ENCODE measurements at regions of chr16 and their contacts with region 1.

Region 1: GRCh38 chr16:83083361-83083760 is 456.6 kb downstream of the CDH13 start:
- DNase-seq: no peak
- H3K4me3 ChIP-seq: no peak overlapping the region
- H3K27ac ChIP-seq: no peak overlapping the region
- H3K4me1 ChIP-seq: no peaks in the 10 kb centered on the region
- H3K27me3 ChIP-seq: no peaks in the 10 kb centered on the region
- CTCF ChIP-seq: no peak
- POLR2A ChIP-seq: no peak

Region 2: DNA sequence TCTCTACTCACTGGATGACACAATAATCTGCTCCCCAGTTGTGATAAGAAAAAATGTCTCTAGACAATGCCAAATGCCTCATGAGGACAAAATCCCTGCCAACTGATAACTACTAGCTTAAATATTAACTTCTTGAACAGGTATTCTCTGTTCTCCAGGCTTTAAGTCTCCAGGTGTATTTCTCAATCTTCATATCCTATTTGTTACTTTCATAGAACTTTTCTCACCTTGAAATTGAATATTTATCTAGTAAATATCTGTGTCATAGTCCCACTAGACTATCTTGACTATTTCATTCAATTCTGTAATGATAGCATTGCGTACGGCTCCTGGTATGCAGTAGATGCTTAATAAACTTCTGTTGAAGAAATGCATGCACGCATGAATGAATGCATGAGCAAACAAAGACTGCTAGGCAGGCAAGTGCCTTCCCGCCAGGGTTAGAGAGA is 1032.4 kb before region 1 on chr16:
- intact Hi-C with region 1: loop called (anchors 5 kb)
- DNase-seq: no peak
- H3K4me3 ChIP-seq: no peak overlapping the region
- H3K27ac ChIP-seq: no peak overlapping the region
- H3K4me1 ChIP-seq: peaks cover 0 to 5% of the 10 kb centered on the region in 2 donors
- H3K27me3 ChIP-seq: peaks cover 0 to 8% of the 10 kb centered on the region in 2 donors
- CTCF ChIP-seq: no peak
- POLR2A ChIP-seq: no peak

Region 3: DNA sequence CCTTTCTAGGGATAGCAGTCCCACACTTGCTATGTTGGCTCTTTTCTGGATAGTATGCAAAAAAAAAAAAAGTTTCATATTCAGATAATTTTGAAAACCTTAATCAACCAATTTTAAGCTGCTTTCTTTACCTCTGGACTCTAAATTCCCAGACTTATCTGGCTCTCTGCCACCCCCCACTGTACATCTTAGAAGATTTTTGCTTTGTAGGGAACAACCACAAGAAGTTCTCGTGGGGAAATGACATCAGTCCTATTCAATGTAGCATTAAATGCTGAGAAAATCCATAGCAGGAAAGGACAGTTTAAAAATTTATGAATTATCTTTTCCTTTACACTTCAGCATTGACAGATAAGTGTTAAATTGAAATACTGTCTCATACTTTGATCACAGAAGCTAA is 161.7 kb after region 1 on chr16:
- intact Hi-C with region 1: no loop called
- DNase-seq: no peak
- H3K4me3 ChIP-seq: no peak overlapping the region
- H3K27ac ChIP-seq: no peak overlapping the region
- H3K4me1 ChIP-seq: no peaks in the 10 kb centered on the region
- H3K27me3 ChIP-seq: peaks cover 0 to 11% of the 10 kb centered on the region in 2 donors
- CTCF ChIP-seq: no peak
- POLR2A ChIP-seq: no peak

Measured in breast epithelium (tissue), 4 donors.